Panc1 (cell line): ENCODE measurements at regions of chr2 and their contacts with region 1.

Region 1: DNA sequence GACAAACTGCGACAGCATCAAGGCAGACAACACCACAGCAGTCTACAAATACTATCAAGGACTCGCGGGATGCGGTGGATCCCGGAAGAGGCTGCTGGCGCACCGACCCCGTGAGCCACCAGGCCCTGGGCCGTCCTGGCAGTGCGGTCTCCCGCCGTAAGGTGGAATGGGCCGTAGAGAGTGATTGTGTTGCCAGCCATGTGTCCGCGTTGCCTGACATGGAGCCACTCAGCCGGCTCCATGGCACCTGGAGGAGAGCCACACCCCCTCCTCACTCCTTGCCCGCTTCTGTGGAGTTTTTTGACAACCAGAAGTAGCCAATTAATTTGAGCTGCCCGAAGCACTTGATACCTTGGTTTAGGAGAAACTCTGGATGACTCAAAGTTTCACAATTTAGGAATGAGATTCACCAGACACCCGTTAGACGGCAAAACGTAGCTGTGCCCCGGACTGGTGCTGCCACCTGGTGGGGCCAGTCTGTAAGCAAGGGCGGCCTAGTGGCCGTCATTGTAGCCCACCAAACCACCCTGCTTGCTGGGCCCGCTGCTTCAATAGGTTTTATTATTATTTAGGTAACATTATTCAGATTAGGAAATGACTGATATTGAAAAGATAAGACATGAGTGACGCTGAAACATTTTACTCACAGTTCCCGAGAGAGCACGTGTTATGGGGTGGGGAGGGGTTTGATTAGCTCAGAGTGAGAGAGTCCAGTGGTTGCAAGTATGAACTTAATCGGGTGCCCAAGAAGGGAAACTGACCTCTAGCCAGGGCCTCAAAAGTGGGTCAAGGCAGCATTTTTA is 10.2 kb upstream of the IMP4 start:
- DNase-seq: peak; percentile 68
- ATAC-seq: peak; percentile 53
- H3K4me3 ChIP-seq: peak overlapping the region in 1 of 2 experiments; percentile 32; a peak in 3 of 4 replicates
- H3K27ac ChIP-seq: no peak overlapping the region
- H3K4me1 ChIP-seq: peaks cover 6% of the 10 kb centered on the region; the same call in 1 of the 2 replicates
- H3K27me3 ChIP-seq: no peaks in the 10 kb centered on the region
- CTCF ChIP-seq: peak; percentile 97

Region 2: GRCh38 chr2:129936334-129936934 is 396.0 kb before region 1 on chr2:
- CTCF ChIA-PET with region 1: no interaction called
- POLR2A ChIA-PET with region 1: no interaction called
- in situ Hi-C with region 1: no loop called
- intact Hi-C with region 1: no loop called
- DNase-seq: no peak
- ATAC-seq: peak; percentile 78; the same call in 1 of the 2 replicates
- H3K4me3 ChIP-seq: no peak overlapping the region
- H3K27ac ChIP-seq: no peak overlapping the region
- H3K4me1 ChIP-seq: peaks cover 6% of the 10 kb centered on the region
- H3K27me3 ChIP-seq: peaks cover 2% of the 10 kb centered on the region; the same call in 1 of the 2 replicates
- CTCF ChIP-seq: peak; percentile 63

Region 3: DNA sequence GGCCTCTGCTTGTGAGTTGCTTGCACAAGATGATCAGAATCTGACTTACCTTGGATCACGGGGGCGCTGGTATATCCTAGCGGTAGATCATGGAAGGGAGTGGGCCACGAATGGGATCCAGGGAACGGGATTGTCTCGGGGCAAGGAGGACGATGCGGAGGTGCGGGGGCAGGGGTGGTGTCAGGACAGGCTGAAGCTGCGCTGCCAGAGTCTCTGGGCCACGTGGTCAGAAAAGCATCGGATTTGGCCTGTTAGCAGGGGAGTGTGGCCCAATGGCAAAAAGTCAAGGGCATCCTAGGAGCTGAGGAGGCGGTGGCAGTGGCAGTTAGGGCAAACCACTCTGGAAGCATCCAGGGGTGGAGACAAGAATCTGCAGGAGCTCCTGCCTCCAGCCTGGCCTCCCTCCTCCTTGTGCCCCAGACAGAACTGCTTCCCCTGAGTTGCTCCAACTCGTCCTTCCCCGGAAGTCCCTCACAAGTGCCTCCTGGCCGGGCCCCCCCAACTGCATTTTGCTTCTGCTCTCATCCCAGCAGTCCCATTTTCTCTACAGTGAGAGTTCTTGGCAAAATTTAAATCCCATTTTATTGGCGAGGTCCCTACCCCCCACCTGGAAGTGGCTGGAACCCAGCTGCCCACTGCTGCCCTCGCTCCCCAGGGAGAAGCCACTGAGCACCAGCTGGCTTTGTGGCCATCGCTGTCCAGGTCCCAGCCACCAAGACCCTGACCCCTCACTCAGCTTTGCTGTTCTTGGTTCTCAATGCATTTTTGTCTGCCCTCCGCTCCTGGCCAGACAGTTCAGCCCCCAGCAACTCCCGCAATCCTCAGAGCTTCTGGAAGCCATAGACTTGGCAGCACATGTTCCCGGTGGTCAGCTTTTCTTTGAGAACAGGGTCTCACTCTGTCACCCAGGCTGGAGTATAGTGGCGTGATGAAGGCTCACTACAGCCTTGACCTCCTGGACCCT is 182.0 kb before region 1 on chr2:
- CTCF ChIA-PET with region 1: no interaction called
- POLR2A ChIA-PET with region 1: no interaction called
- in situ Hi-C with region 1: no loop called
- intact Hi-C with region 1: loop called (anchors 10 kb)
- DNase-seq: no peak
- ATAC-seq: no peak; the same call in 1 of the 2 replicates
- H3K4me3 ChIP-seq: no peak overlapping the region
- H3K27ac ChIP-seq: no peak overlapping the region
- H3K4me1 ChIP-seq: no peaks in the 10 kb centered on the region
- H3K27me3 ChIP-seq: no peaks in the 10 kb centered on the region
- CTCF ChIP-seq: no peak

Region 4: DNA sequence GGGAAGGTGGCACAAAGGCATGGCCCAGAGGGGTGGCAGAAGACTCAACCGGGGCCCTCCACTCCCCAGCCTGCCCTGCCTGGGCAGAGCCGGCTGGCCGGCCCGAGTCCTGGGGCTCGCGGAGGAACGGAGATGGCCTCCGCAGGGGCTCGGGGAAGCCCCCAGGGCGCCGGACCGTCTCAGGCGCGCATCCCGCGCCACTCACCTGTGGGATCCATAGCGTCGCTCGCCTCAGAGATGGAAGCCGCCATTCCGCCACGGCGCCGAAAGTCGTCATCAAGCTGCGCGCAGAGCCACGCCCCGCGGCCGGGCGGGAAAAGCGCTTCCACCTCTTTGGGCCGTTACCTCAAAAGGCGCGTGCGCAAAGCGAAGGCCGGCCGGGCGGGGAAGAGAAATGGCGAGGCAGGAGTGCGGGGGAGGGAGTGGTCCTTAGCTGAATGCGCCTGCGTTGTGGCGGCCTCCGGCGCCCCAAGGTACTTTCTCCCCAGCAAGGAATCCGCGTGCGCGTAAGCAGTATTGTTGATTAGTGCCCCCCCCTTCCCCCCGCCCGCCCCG is 151.1 kb before region 1 on chr2 and contains the start of gene SMPD4:
- CTCF ChIA-PET with region 1: interaction called, 5 read pairs
- POLR2A ChIA-PET with region 1: no interaction called
- in situ Hi-C with region 1: no loop called
- intact Hi-C with region 1: loop called (anchors 5 kb)
- DNase-seq: peak; percentile 70
- ATAC-seq: peak; percentile 84
- H3K4me3 ChIP-seq: peak within 1 kb of the TSS; percentile 81 to 100
- H3K27ac ChIP-seq: peak within 1 kb of the TSS; percentile 93
- H3K4me1 ChIP-seq: peaks cover 4% of the 10 kb centered on the region; the same call in 1 of the 2 replicates
- H3K27me3 ChIP-seq: no peaks in the 10 kb centered on the region
- CTCF ChIP-seq: no peak
- total RNA-seq, gene SMPD4: 89.0 TPM

Region 5: DNA sequence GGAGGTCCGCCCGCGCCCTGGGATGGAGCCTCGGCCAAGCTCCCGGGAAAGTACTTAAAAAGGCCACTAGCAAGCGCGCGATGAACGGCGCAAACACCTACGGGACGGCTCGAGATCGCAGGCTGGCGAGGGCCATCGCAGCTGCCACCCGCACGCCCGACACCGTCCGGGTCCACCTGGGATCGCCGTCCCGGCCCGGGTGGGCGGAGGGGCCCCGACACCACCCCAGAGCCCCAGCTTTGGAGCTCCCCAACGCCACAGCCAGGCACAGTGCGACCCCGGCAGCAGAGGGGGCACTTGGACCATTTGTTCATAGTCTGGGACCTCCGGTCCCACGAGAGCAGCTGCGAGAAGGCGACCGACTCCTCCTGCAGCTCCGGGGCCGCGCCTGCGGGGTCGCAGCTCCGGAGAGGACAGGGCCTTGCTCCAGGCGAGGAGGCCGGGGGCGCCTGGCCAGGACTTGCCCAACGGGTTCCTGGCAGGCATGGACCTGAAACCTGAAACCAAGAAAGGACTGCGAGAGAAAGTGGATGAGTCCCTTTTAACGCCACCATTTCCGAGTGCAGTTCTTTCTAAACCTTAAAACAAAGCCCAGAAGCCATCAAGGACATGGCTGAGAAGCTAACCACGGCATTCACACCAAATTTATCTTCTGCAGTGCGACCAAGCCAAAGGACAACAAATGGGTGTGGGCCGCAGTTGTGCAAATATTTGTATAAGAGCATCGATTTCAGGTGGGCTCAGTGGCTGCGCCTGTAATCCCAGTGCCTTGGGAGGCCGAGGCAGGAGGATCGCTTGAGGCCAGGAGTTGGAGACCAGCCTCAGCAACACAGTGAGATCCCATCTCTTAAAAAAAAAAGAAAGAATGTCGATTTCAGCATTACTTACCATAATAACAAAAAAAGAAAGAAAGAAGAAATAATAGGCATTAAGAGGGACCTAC is 43.7 kb before region 1 on chr2:
- CTCF ChIA-PET with region 1: interaction called, 20 read pairs
- POLR2A ChIA-PET with region 1: interaction called, 4 read pairs
- in situ Hi-C with region 1: no loop called
- intact Hi-C with region 1: loop called (anchors 1 kb)
- DNase-seq: peak; percentile 8
- ATAC-seq: peak; percentile 93
- H3K4me3 ChIP-seq: peak overlapping the region; percentile 43 to 52
- H3K27ac ChIP-seq: 0 out of 2 replicates have a peak overlapping the region, but pooled peaks have one; percentile 34
- H3K4me1 ChIP-seq: no peaks in the 10 kb centered on the region
- H3K27me3 ChIP-seq: no peaks in the 10 kb centered on the region
- CTCF ChIP-seq: peak; percentile 85